PC-3 (cell line): ENCODE measurements at regions of chr1 and their contacts with region 1.

Region 1: GRCh38 chr1:172532700-172533509 is at the start of gene SUCO:
- DNase-seq: peak; percentile 100
- ATAC-seq: peak; percentile 80
- H3K4me3 ChIP-seq: peak within 1 kb of the TSS; percentile 79
- H3K27ac ChIP-seq: peak within 1 kb of the TSS; percentile 65
- H3K4me1 ChIP-seq: peaks cover 61% of the 10 kb centered on the region
- H3K27me3 ChIP-seq: no peaks in the 10 kb centered on the region
- CTCF ChIP-seq: peak; percentile 39; the same call in 1 of the 2 replicates
- total RNA-seq, gene SUCO: 72.0 and 81.3 TPM in 2 replicates

Region 2: DNA sequence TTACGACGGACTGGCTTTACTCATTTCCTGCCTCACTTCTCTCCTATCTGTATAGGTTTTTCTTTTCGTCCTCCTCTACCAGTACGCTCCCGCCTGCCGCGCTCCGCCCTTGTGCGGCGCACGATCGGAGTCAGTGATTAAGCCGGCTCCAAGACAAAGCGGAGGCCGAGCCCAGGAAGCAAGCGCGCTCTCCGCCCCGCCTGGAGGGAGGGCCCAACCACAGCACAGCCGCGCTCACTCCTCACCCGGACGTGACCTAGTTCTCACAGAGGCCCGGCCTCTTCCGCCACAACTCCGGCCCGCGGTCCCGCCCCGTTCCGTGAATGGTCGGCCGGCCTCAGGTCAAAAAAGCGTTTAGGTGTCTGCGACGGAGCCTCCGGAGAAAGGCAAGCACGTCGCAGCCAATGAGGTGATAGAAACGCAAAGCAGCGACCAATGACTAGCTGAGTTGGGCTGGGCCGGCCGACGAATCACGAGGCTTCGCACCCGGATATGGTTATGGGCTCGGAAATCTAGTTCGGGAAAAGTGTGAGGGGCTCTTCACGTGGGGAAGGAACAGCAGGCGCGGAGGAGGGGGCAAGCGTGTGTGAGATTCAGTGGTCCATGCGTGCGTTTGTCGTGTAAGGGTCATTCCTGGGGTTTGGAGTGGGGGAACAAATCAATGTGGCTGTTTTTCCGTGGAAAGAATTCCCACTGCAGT is 751.6 kb before region 1 on chr1 and contains the start of gene METTL13:
- CTCF ChIA-PET with region 1: no interaction called
- POLR2A ChIA-PET with region 1: interaction called, 3 read pairs
- intact Hi-C with region 1: loop called (anchors 1 kb)
- DNase-seq: peak; percentile 100
- ATAC-seq: peak; percentile 97
- H3K4me3 ChIP-seq: peak within 1 kb of the TSS; percentile 75
- H3K27ac ChIP-seq: peak within 1 kb of the TSS; percentile 61
- H3K4me1 ChIP-seq: peaks cover 39% of the 10 kb centered on the region
- H3K27me3 ChIP-seq: no peaks in the 10 kb centered on the region
- CTCF ChIP-seq: no peak
- total RNA-seq, gene METTL13: 115 and 138 TPM in 2 replicates

Region 3: GRCh38 chr1:172144445-172145061 is 388.4 kb before region 1 on chr1:
- CTCF ChIA-PET with region 1: no interaction called
- POLR2A ChIA-PET with region 1: no interaction called
- intact Hi-C with region 1: loop called (anchors 10 kb)
- DNase-seq: no peak
- ATAC-seq: no peak
- H3K4me3 ChIP-seq: no peak overlapping the region
- H3K27ac ChIP-seq: no peak overlapping the region
- H3K4me1 ChIP-seq: peaks cover 36% of the 10 kb centered on the region
- H3K27me3 ChIP-seq: no peaks in the 10 kb centered on the region
- CTCF ChIP-seq: no peak

Region 4: DNA sequence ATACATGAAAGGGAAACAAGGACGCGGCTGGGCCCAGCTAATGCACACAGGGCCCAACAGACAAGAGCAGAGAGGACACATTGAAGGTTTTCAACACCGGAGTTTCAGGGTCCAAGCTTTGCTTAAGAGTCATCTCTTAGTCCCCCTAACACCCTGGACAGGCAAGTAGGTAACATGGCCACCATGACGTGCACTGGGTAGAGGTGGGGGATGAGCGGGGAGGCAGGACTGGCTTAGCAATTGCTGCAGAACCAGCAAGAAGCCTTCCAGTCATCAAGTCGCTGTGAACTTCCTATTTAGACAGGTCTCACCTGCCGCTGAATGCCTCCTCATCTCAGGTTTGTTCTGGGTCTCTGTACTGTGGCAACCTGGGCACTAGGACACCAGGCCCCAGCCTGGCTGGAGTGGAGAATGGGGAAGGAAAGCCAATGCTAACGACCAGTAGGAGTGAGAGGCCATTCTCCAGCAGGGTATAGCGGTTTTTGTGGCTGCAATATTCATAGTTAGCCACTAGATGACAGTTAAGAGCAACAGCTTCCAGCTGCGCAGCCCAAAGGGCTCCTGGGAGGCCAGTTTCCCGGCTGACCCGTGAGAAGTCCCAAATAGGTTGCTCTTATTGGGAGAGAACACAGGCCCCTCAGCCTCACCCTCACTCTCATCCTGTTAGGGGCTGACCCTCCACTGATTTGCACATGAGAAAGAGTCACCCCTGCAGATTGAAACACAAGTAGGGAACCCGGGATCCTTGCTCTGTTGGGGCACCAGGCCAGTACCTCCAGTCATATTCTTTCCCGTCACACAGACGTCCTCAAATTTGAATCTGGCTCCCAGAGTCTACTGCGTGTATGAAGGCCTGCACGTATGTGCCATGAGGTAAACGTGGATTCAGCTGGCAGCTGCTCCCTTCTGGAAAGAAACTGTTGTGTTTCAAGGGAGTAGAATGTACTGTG is 83.0 kb before region 1 on chr1:
- CTCF ChIA-PET with region 1: interaction called, 19 read pairs
- POLR2A ChIA-PET with region 1: interaction called, 32 read pairs
- intact Hi-C with region 1: loop called (anchors 1 kb)
- DNase-seq: peak; percentile 97
- ATAC-seq: peak; percentile 48
- H3K4me3 ChIP-seq: peak overlapping the region; percentile 45
- H3K27ac ChIP-seq: peak overlapping the region; percentile 86
- H3K4me1 ChIP-seq: peaks cover 79% of the 10 kb centered on the region
- H3K27me3 ChIP-seq: no peaks in the 10 kb centered on the region
- CTCF ChIP-seq: peak; percentile 100

Region 5: GRCh38 chr1:172499636-172500141 is 33.2 kb before region 1 on chr1:
- CTCF ChIA-PET with region 1: interaction called, 4 read pairs
- POLR2A ChIA-PET with region 1: interaction called, 9 read pairs
- intact Hi-C with region 1: loop called (anchors 1 kb)
- DNase-seq: peak; percentile 100
- ATAC-seq: peak; percentile 92
- H3K4me3 ChIP-seq: no peak overlapping the region
- H3K27ac ChIP-seq: peak overlapping the region; percentile 44
- H3K4me1 ChIP-seq: peaks cover 38% of the 10 kb centered on the region
- H3K27me3 ChIP-seq: no peaks in the 10 kb centered on the region
- CTCF ChIP-seq: peak; percentile 14; the same call in 1 of the 2 replicates

Region 6: GRCh38 chr1:172588296-172589291 is 55.7 kb after region 1 on chr1:
- CTCF ChIA-PET with region 1: no interaction called
- POLR2A ChIA-PET with region 1: interaction called, 17 read pairs
- intact Hi-C with region 1: loop called (anchors 1 kb)
- DNase-seq: peak; percentile 100
- ATAC-seq: peak; percentile 90
- H3K4me3 ChIP-seq: peak overlapping the region; percentile 46
- H3K27ac ChIP-seq: peak overlapping the region; percentile 75
- H3K4me1 ChIP-seq: peaks cover 61% of the 10 kb centered on the region
- H3K27me3 ChIP-seq: no peaks in the 10 kb centered on the region
- CTCF ChIP-seq: no peak

Region 7: DNA sequence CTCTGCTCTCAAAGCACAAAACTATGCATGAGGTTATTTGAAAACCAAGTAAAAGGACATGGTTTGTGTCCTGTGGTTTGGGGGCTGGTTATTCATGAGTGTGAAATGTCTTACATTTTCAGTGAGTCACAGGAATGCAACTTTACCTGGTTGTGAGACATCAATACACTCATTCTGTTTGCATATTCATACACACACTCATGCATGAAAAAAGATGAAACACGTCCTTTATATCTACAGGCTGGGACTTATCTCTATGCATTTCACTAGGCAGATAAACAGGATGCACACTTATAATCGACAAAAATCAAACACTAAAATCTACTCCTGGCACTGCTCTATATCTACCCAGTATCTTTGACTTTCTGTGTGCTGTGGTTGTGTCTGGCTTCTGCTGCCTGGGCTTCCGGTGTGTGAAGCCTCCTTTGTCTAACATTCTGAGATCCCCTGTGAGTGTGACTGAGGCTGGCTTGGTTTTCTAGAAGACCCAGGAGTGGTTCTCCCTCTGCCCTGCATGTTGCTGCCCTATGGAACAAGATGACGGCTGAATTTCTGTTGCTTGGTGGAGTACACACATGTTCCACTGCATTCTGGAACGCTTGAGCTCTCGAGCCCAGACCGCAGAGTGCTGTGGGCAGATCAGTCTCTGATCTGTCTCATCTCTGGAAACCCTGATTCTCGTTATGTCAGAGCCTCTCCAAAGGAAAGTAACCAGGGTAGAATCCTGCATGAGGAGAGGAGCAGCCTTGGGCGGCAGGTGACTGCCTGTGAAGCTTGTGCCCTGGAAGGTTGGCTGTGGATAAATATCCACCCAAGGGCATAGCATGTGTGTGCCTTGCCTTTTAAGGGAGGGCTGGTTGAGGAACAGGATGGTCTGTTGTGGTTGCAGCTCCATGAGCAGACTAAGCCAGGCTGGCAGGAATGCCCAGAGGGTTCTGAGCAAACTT is 106.3 kb after region 1 on chr1:
- CTCF ChIA-PET with region 1: no interaction called
- POLR2A ChIA-PET with region 1: interaction called, 3 read pairs
- intact Hi-C with region 1: loop called (anchors 1 kb)
- DNase-seq: peak; percentile 100
- ATAC-seq: peak; percentile 78
- H3K4me3 ChIP-seq: peak overlapping the region; percentile 36
- H3K27ac ChIP-seq: peak overlapping the region; percentile 78
- H3K4me1 ChIP-seq: peaks cover 71% of the 10 kb centered on the region
- H3K27me3 ChIP-seq: no peaks in the 10 kb centered on the region
- CTCF ChIP-seq: no peak